Panc1 (cell line): ENCODE measurements at regions of chr4 and their contacts with region 1.

Region 1: DNA sequence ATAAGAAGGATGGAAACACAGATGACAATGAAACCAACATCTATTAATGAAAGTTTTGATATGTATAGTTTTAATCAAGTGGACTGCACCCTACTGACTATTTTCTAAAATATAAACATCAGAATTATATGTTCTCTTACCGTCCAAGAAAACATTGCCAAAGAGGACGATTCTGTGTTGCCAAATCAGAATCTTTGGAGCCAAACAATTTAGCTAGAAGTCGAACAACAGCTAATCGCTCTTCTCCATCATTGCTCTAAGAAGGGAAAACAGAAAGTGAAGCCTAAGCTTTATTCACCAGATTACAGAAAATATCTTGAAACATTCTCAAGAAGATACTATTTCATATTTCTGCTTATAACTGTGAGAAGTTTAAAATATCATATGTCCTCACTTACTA is 64.2 kb downstream of the PDS5A start:
- DNase-seq: no peak
- ATAC-seq: no peak
- H3K4me3 ChIP-seq: no peak overlapping the region
- H3K27ac ChIP-seq: no peak overlapping the region
- H3K4me1 ChIP-seq: no peaks in the 10 kb centered on the region
- H3K27me3 ChIP-seq: no peaks in the 10 kb centered on the region
- CTCF ChIP-seq: no peak

Region 2: DNA sequence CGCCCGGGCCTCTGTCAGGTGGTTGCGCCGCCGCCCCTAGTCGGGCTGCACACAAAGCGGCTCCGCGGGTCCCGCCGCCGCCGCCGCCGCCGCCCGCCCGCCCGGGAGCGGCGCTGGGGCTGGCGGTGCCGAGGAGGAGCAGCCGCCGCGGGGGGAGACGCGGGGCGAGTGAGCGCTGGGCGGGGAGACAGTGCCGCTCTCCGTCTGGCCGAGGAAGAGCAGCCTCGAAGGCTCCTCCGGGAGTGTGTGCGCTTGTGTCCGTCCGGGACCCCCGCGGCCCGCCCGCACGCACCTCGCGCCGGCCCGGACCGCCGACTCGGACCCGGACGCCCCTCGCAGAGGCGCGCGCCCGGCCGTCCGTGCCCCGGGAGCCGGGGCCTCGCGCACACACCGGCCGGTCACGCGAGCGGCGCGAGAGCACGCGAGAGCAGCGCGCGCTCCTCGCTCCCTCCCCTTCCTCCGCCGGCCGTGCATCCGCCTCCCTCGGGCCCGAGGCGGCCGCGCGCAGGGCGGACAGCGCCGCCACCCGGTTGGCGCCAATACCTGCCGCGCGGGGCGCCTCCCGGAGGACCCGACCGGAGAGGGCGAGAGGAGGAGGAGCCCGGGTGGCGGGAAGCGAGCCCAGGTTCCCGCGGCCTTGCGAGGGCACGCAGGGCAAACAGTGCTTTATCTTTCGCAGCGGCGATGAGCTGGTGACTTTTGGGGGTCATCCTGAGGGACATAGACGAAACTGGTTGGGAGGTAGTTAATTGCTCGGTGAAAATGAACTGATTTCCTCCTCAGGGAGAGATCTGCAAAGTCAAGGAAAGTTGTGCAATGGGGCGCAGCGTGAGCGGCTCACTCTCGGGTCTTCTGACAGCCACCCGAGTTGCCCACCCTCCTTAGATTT is 64.3 kb after region 1 on chr4 and contains the start of gene PDS5A:
- CTCF ChIA-PET with region 1: interaction called, 4 read pairs
- POLR2A ChIA-PET with region 1: no interaction called
- in situ Hi-C with region 1: no loop called
- intact Hi-C with region 1: loop called (anchors 10 kb)
- DNase-seq: peak; percentile 28
- ATAC-seq: peak; percentile 90
- H3K4me3 ChIP-seq: peak within 1 kb of the TSS; percentile 60 to 81
- H3K27ac ChIP-seq: peak within 1 kb of the TSS; percentile 82
- H3K4me1 ChIP-seq: peaks cover 7% of the 10 kb centered on the region
- H3K27me3 ChIP-seq: no peaks in the 10 kb centered on the region
- CTCF ChIP-seq: peak; percentile 97
- total RNA-seq, gene PDS5A: 69.2 TPM